Activated CD4-positive, alpha-beta memory T cell treated with anti-CD3 and anti-CD28 coated beads for 36 hours (primary cell): ENCODE measurements at regions of chr4 and their contacts with region 1.

Region 1: DNA sequence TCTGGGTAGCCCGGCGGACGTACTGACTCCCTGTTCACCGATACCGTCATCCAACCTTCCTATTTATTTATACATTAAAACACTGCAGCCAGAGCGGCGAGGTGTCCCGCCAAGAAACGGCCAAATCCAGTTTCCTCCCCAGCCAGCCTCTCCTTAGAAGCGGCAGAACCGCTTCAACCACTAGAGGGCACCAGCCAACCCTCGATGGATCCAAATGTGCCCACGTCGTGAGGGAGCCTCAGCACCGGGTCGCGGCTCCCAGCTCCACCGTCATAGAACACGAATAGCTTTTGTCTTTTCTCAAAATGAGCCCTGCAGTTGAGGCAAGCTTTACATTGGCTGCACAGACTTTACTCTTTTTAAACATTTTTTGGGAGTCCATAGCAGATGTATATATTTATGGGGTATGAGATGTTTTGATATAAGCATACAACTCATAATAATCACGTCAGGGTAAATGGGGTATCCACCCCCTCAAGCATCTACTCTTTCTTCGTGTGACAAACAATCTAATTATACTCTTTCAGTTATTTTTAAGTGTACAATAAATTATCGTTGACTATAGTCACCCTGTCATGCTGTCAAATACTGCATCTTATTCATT is 13.0 kb upstream of the HELT start:
- DNase-seq: peak; percentile 87
- H3K4me3 Mint-ChIP-seq: no peak overlapping the region
- H3K27ac Mint-ChIP-seq: no peak overlapping the region
- H3K4me1 Mint-ChIP-seq: peaks cover 7% of the 10 kb centered on the region
- H3K27me3 Mint-ChIP-seq: peaks cover 30% of the 10 kb centered on the region

Region 2: DNA sequence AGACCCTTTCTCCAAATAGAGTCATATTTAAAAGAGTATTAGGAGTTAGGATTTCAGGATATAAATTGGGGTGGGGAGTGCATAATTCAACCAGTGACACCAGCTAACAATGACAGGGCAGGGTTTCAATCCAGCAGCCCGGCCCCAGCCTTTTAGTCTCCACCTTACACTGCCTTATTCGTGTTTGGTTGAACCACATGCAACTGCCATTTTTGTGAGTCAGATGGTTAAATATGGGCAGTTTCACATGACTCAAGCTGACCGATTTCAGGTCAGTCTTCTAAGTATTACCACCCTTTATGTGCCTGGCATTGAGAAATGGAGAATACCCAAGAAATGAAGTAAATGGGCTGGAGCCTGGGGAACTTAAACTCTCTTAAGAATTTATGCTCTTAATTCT is 997.4 kb before region 1 on chr4:
- CTCF ChIA-PET with region 1: no interaction called
- POLR2A ChIA-PET with region 1: no interaction called
- intact Hi-C with region 1: no loop called
- DNase-seq: no peak
- H3K4me3 Mint-ChIP-seq: no peak overlapping the region
- H3K27ac Mint-ChIP-seq: no peak overlapping the region
- H3K4me1 Mint-ChIP-seq: peaks cover 2% of the 10 kb centered on the region
- H3K27me3 Mint-ChIP-seq: no peaks in the 10 kb centered on the region

Region 3: DNA sequence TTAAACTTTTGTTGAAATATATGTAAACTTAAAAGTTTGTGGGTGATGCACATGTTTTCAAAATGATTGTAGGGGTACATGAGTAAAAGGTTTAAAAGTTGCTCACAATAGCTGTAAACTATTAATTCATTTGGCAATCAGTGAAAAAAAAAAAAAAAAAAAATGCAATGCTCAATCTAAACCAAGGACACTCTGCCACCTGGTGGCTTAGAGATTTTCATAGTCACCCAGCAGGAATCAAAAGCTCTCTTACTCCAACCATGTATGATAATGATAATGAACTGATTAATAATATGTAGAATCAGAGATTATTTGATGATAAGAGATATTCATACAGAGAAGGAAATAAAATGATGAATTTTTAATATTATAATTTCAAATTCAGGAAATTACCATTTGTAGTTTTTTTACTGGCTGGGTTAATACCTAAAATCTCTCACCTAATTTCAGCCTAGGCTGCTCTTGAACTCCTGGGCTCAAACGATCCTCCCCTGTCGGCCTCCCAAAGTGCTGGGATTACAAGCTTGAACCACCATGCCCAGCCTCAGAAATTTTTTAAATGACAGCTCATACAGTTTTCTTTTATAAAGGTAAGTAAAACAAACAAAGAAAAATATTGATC is 90.8 kb after region 1 on chr4:
- CTCF ChIA-PET with region 1: interaction called, 11 read pairs
- POLR2A ChIA-PET with region 1: no interaction called
- intact Hi-C with region 1: loop called (anchors 1 kb)
- DNase-seq: no peak
- H3K4me3 Mint-ChIP-seq: no peak overlapping the region
- H3K27ac Mint-ChIP-seq: no peak overlapping the region
- H3K4me1 Mint-ChIP-seq: no peaks in the 10 kb centered on the region
- H3K27me3 Mint-ChIP-seq: peaks cover 11% of the 10 kb centered on the region